B cell (primary cell): ENCODE measurements at regions of chrX and their contacts with region 1.

Region 1: GRCh38 chrX:48597353-48598264 is at the start of gene WDR13:
- DNase-seq: peak; percentile 91
- ATAC-seq: peak; percentile 76
- H3K4me3 ChIP-seq: peak within 1 kb of the TSS; percentile 55 to 93 (median 75)
- H3K4me3 Mint-ChIP-seq: peak within 1 kb of the TSS; percentile 98
- H3K27ac ChIP-seq: peak within 1 kb of the TSS; percentile 95 to 98
- H3K27ac Mint-ChIP-seq: peak within 1 kb of the TSS; percentile 100
- H3K4me1 ChIP-seq: peaks cover 0 to 12% of the 10 kb centered on the region in 2 donors
- H3K4me1 Mint-ChIP-seq: peaks cover 8% of the 10 kb centered on the region
- H3K27me3 ChIP-seq: no peaks in the 10 kb centered on the region
- H3K27me3 Mint-ChIP-seq: no peaks in the 10 kb centered on the region
- CTCF ChIP-seq: no peak
- total RNA-seq, gene WDR13: 85.1 and 94.6 TPM in 2 replicates

Region 2: GRCh38 chrX:47836164-47837072 is 761.2 kb before region 1 on chrX and contains the start of gene ZNF81:
- CTCF ChIA-PET with region 1: no interaction called
- POLR2A ChIA-PET with region 1: no interaction called
- intact Hi-C with region 1: loop called (anchors 5 kb)
- DNase-seq: peak; percentile 93
- ATAC-seq: peak; percentile 97
- H3K4me3 ChIP-seq: peak within 1 kb of the TSS; percentile 66 to 76 (median 70)
- H3K4me3 Mint-ChIP-seq: peak within 1 kb of the TSS; percentile 99
- H3K27ac ChIP-seq: peak within 1 kb of the TSS; percentile 64 to 73
- H3K27ac Mint-ChIP-seq: peak within 1 kb of the TSS; percentile 98
- H3K4me1 ChIP-seq: peaks cover 9% of the 10 kb centered on the region in 2 donors
- H3K4me1 Mint-ChIP-seq: peaks cover 24% of the 10 kb centered on the region
- H3K27me3 ChIP-seq: no peaks in the 10 kb centered on the region
- H3K27me3 Mint-ChIP-seq: no peaks in the 10 kb centered on the region
- CTCF ChIP-seq: no peak
- total RNA-seq, gene ZNF81: 15.3 and 17.7 TPM in 2 replicates

Region 3: DNA sequence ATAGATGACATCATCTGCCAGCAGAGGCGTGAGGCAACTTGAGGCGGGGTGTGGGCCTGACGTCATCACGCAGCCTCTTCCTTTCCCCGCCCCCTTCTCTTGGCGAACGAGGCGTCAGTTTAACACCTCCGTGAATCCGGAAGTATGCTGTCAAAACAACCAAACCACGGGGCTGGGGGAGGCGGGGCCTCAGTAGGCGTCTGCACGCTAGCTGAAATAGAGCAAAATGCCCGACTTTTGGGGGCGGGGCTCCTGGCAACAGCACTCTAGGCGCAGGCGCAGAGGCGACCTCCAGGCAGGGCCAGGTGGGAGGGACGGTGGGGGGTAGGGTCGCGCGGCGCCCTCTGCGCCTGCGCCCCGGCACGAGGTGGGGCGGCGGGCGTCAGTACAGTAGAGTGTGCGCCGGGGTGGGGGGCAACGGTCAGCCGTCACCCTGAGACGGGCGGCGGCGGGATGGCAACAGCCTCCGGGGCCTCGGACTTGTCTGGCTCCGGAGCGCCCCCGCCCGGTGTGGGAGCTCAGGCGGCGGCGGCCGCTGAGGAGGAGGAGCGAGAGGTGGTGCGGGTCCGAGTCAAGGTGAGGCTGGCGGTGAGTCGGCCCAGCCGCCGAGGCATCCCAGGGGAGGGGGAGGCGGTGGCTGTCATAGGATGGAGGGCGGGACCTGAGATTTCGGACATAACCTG is 58.1 kb before region 1 on chrX and contains the start of gene TBC1D25:
- CTCF ChIA-PET with region 1: interaction called, 3 read pairs
- POLR2A ChIA-PET with region 1: interaction called, 6 read pairs
- intact Hi-C with region 1: loop called (anchors 1 kb)
- DNase-seq: peak; percentile 97
- ATAC-seq: peak; percentile 79
- H3K4me3 ChIP-seq: peak within 1 kb of the TSS in 4 of 5 experiments; percentile 66 to 76 (median 74)
- H3K4me3 Mint-ChIP-seq: peak within 1 kb of the TSS; percentile 91
- H3K27ac ChIP-seq: peak within 1 kb of the TSS; percentile 94 to 97
- H3K27ac Mint-ChIP-seq: peak within 1 kb of the TSS; percentile 97
- H3K4me1 ChIP-seq: peaks cover 10 to 18% of the 10 kb centered on the region in 2 donors
- H3K4me1 Mint-ChIP-seq: peaks cover 20% of the 10 kb centered on the region
- H3K27me3 ChIP-seq: no peaks in the 10 kb centered on the region
- H3K27me3 Mint-ChIP-seq: no peaks in the 10 kb centered on the region
- CTCF ChIP-seq: peak; percentile 50
- total RNA-seq, gene TBC1D25: 24.6 and 25.2 TPM in 2 replicates

Region 4: GRCh38 chrX:48737213-48737938 is 139.8 kb after region 1 on chrX:
- CTCF ChIA-PET with region 1: no interaction called
- POLR2A ChIA-PET with region 1: no interaction called
- intact Hi-C with region 1: loop called (anchors 1 kb)
- DNase-seq: peak; percentile 94
- ATAC-seq: peak; percentile 98
- H3K4me3 ChIP-seq: peak overlapping the region; percentile 15 to 75 (median 67)
- H3K4me3 Mint-ChIP-seq: peak overlapping the region; percentile 98
- H3K27ac ChIP-seq: peak overlapping the region; percentile 85 to 91
- H3K27ac Mint-ChIP-seq: peak overlapping the region; percentile 96
- H3K4me1 ChIP-seq: peaks cover 0 to 15% of the 10 kb centered on the region in 2 donors
- H3K4me1 Mint-ChIP-seq: peaks cover 13% of the 10 kb centered on the region
- H3K27me3 ChIP-seq: no peaks in the 10 kb centered on the region
- H3K27me3 Mint-ChIP-seq: no peaks in the 10 kb centered on the region
- CTCF ChIP-seq: no peak

Region 5: GRCh38 chrX:48801280-48802088 is 203.9 kb after region 1 on chrX and contains the start of gene HDAC6:
- CTCF ChIA-PET with region 1: no interaction called
- POLR2A ChIA-PET with region 1: interaction called, 6 read pairs
- intact Hi-C with region 1: loop called (anchors 1 kb)
- DNase-seq: peak; percentile 97
- ATAC-seq: peak; percentile 80
- H3K4me3 ChIP-seq: peak within 1 kb of the TSS; percentile 65 to 82 (median 76)
- H3K4me3 Mint-ChIP-seq: peak within 1 kb of the TSS; percentile 96
- H3K27ac ChIP-seq: peak within 1 kb of the TSS; percentile 95 to 96
- H3K27ac Mint-ChIP-seq: peak within 1 kb of the TSS; percentile 98
- H3K4me1 ChIP-seq: peaks cover 4 to 16% of the 10 kb centered on the region in 2 donors
- H3K4me1 Mint-ChIP-seq: peaks cover 14% of the 10 kb centered on the region
- H3K27me3 ChIP-seq: no peaks in the 10 kb centered on the region
- H3K27me3 Mint-ChIP-seq: no peaks in the 10 kb centered on the region
- CTCF ChIP-seq: no peak
- total RNA-seq, gene HDAC6: 168 and 170 TPM in 2 replicates